IMR-90 (cell line): ENCODE measurements at regions of chr3 and their contacts with region 1.

Region 1: GRCh38 chr3:15205934-15206661 is at the start of gene CAPN7:
- DNase-seq: peak; percentile 91
- ATAC-seq: peak; percentile 97
- H3K4me3 ChIP-seq: peak within 1 kb of the TSS; percentile 92
- H3K27ac ChIP-seq: peak within 1 kb of the TSS; percentile 84
- H3K4me1 ChIP-seq: no peaks in the 10 kb centered on the region
- H3K27me3 ChIP-seq: no peaks in the 10 kb centered on the region; the same call in 1 of the 2 replicates
- CTCF ChIP-seq: peak; percentile 55
- POLR2A ChIP-seq: peak; percentile 91
- RAD21 ChIP-seq: 0 out of 2 replicates have a peak, but pooled peaks have one; percentile 15
- total RNA-seq, gene CAPN7: 21.3 and 28.1 TPM in 2 replicates

Region 2: DNA sequence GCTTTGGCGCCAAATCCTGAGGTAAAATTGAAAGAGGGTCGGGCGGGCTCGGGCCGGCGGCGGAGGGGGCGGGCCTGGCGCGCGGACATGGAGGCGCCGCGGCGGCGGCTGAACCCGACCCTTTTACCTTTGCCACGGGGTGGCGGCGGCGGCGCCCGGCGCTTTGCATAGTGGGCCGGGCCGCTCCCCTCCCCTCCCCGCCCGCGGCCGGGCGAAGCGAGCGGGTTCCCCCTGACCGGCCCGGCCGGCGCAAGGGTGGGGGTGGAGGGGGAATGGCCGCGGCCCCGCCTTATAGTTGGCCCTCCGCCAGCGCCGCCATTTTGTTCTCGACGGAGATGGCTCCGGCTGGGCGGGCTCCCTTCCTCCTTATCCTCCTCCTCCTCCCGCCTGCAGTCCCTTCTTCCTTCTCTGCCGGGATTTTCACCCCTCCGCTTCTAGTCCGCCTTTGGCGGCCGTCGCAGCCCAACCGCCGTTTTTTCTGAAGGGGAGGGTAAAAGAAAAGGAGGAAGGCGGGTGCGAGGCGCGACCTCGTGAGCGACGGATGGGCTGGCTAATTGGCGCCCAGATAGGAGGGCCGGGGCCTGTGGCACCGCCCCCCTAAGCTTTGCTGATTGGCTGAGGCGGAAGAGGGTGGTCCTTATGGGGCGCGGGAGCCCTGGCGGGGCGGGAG is 258.1 kb before region 1 on chr3:
- CTCF ChIA-PET with region 1: no interaction called
- POLR2A ChIA-PET with region 1: no interaction called
- dilution Hi-C with region 1: no loop called
- in situ Hi-C with region 1: loop called (anchors 25 kb)
- intact Hi-C with region 1: no loop called
- DNase-seq: peak; percentile 94
- ATAC-seq: peak; percentile 96
- H3K4me3 ChIP-seq: peak overlapping the region; percentile 75
- H3K27ac ChIP-seq: peak overlapping the region; percentile 95
- H3K4me1 ChIP-seq: no peaks in the 10 kb centered on the region
- H3K27me3 ChIP-seq: no peaks in the 10 kb centered on the region
- CTCF ChIP-seq: no peak
- POLR2A ChIP-seq: peak; percentile 60; the same call in 1 of the 2 replicates
- RAD21 ChIP-seq: no peak

Region 3: GRCh38 chr3:15108082-15108545 is 98.0 kb before region 1 on chr3:
- CTCF ChIA-PET with region 1: interaction called, 7 read pairs
- POLR2A ChIA-PET with region 1: no interaction called
- dilution Hi-C with region 1: no loop called
- in situ Hi-C with region 1: no loop called
- intact Hi-C with region 1: loop called (anchors 1 kb)
- DNase-seq: peak; percentile 69
- ATAC-seq: peak; percentile 98
- H3K4me3 ChIP-seq: no peak overlapping the region
- H3K27ac ChIP-seq: no peak overlapping the region
- H3K4me1 ChIP-seq: no peaks in the 10 kb centered on the region
- H3K27me3 ChIP-seq: peaks cover 20% of the 10 kb centered on the region
- CTCF ChIP-seq: peak; percentile 72
- POLR2A ChIP-seq: no peak
- RAD21 ChIP-seq: peak; percentile 68

Region 4: GRCh38 chr3:15223685-15224572 is 17.8 kb after region 1 on chr3:
- CTCF ChIA-PET with region 1: interaction called, 6 read pairs
- POLR2A ChIA-PET with region 1: no interaction called
- dilution Hi-C with region 1: no loop called
- in situ Hi-C with region 1: no loop called
- intact Hi-C with region 1: loop called (anchors 2 kb)
- DNase-seq: peak; percentile 64
- ATAC-seq: peak; percentile 81
- H3K4me3 ChIP-seq: no peak overlapping the region
- H3K27ac ChIP-seq: no peak overlapping the region
- H3K4me1 ChIP-seq: no peaks in the 10 kb centered on the region
- H3K27me3 ChIP-seq: no peaks in the 10 kb centered on the region
- CTCF ChIP-seq: no peak
- POLR2A ChIP-seq: no peak
- RAD21 ChIP-seq: no peak

Region 5: GRCh38 chr3:15332405-15333098 is 126.5 kb after region 1 on chr3 and contains the start of gene SH3BP5:
- CTCF ChIA-PET with region 1: interaction called, 3 read pairs
- POLR2A ChIA-PET with region 1: no interaction called
- dilution Hi-C with region 1: no loop called
- in situ Hi-C with region 1: no loop called
- intact Hi-C with region 1: loop called (anchors 5 kb)
- DNase-seq: peak; percentile 47
- ATAC-seq: peak; percentile 95
- H3K4me3 ChIP-seq: peak within 1 kb of the TSS; percentile 86
- H3K27ac ChIP-seq: peak within 1 kb of the TSS; percentile 38; the same call in 1 of the 2 replicates
- H3K4me1 ChIP-seq: peaks cover 10% of the 10 kb centered on the region
- H3K27me3 ChIP-seq: no peaks in the 10 kb centered on the region
- CTCF ChIP-seq: peak; percentile 69
- POLR2A ChIP-seq: no peak
- RAD21 ChIP-seq: peak; percentile 62
- total RNA-seq, gene SH3BP5: 14.0 and 14.2 TPM in 2 replicates

Region 6: GRCh38 chr3:15367059-15367458 is 161.0 kb after region 1 on chr3:
- CTCF ChIA-PET with region 1: no interaction called
- POLR2A ChIA-PET with region 1: no interaction called
- dilution Hi-C with region 1: no loop called
- in situ Hi-C with region 1: no loop called
- intact Hi-C with region 1: no loop called
- DNase-seq: peak; percentile 46
- ATAC-seq: peak; percentile 42
- H3K4me3 ChIP-seq: no peak overlapping the region
- H3K27ac ChIP-seq: no peak overlapping the region
- H3K4me1 ChIP-seq: no peaks in the 10 kb centered on the region; the same call in 1 of the 2 replicates
- H3K27me3 ChIP-seq: no peaks in the 10 kb centered on the region
- CTCF ChIP-seq: no peak
- POLR2A ChIP-seq: no peak
- RAD21 ChIP-seq: no peak

Region 7: GRCh38 chr3:15405448-15406050 is 199.5 kb after region 1 on chr3:
- CTCF ChIA-PET with region 1: interaction called, 3 read pairs
- POLR2A ChIA-PET with region 1: no interaction called
- dilution Hi-C with region 1: no loop called
- in situ Hi-C with region 1: no loop called
- intact Hi-C with region 1: loop called (anchors 1 kb)
- DNase-seq: peak; percentile 71
- ATAC-seq: peak; percentile 77
- H3K4me3 ChIP-seq: no peak overlapping the region
- H3K27ac ChIP-seq: no peak overlapping the region
- H3K4me1 ChIP-seq: no peaks in the 10 kb centered on the region
- H3K27me3 ChIP-seq: no peaks in the 10 kb centered on the region
- CTCF ChIP-seq: peak; percentile 65
- POLR2A ChIP-seq: no peak
- RAD21 ChIP-seq: peak; percentile 68

Region 8: GRCh38 chr3:15557511-15557946 is 351.4 kb after region 1 on chr3:
- CTCF ChIA-PET with region 1: interaction called, 4 read pairs
- POLR2A ChIA-PET with region 1: no interaction called
- dilution Hi-C with region 1: no loop called
- in situ Hi-C with region 1: loop called (anchors 10 kb)
- intact Hi-C with region 1: loop called (anchors 1 kb)
- DNase-seq: peak; percentile 75
- ATAC-seq: peak; percentile 99
- H3K4me3 ChIP-seq: no peak overlapping the region
- H3K27ac ChIP-seq: no peak overlapping the region
- H3K4me1 ChIP-seq: no peaks in the 10 kb centered on the region
- H3K27me3 ChIP-seq: no peaks in the 10 kb centered on the region
- CTCF ChIP-seq: peak; percentile 58
- POLR2A ChIP-seq: no peak
- RAD21 ChIP-seq: peak; percentile 52